Endothelial cell of umbilical vein (primary cell): ENCODE measurements at regions of chr3 and their contacts with region 1.

Region 1: GRCh38 chr3:156151824-156152428 is 31.5 kb downstream of the KCNAB1 start:
- DNase-seq: peak; percentile 75
- H3K4me3 ChIP-seq: no peak overlapping the region
- H3K27ac ChIP-seq: no peak overlapping the region
- H3K4me1 ChIP-seq: peaks cover 19% of the 10 kb centered on the region
- H3K27me3 ChIP-seq: peaks cover 0 to 1% of the 10 kb centered on the region in 2 experiments
- CTCF ChIP-seq: peak; percentile 77 to 81
- POLR2A ChIP-seq: no peak

Region 2: GRCh38 chr3:155766206-155766605 is 385.7 kb before region 1 on chr3:
- CTCF ChIA-PET with region 1: no interaction called
- POLR2A ChIA-PET with region 1: no interaction called
- dilution Hi-C with region 1: no loop called
- intact Hi-C with region 1: no loop called
- DNase-seq: no peak
- H3K4me3 ChIP-seq: no peak overlapping the region
- H3K27ac ChIP-seq: no peak overlapping the region
- H3K4me1 ChIP-seq: no peaks in the 10 kb centered on the region
- H3K27me3 ChIP-seq: no peaks in the 10 kb centered on the region
- CTCF ChIP-seq: no peak
- POLR2A ChIP-seq: no peak

Region 3: GRCh38 chr3:156382458-156383346 is 230.8 kb after region 1 on chr3:
- CTCF ChIA-PET with region 1: interaction called, 223 read pairs
- POLR2A ChIA-PET with region 1: no interaction called
- dilution Hi-C with region 1: no loop called
- intact Hi-C with region 1: loop called (anchors 1 kb)
- DNase-seq: peak; percentile 49
- H3K4me3 ChIP-seq: no peak overlapping the region
- H3K27ac ChIP-seq: no peak overlapping the region
- H3K4me1 ChIP-seq: no peaks in the 10 kb centered on the region
- H3K27me3 ChIP-seq: no peaks in the 10 kb centered on the region
- CTCF ChIP-seq: peak; percentile 76 to 84
- POLR2A ChIP-seq: no peak

Region 4: DNA sequence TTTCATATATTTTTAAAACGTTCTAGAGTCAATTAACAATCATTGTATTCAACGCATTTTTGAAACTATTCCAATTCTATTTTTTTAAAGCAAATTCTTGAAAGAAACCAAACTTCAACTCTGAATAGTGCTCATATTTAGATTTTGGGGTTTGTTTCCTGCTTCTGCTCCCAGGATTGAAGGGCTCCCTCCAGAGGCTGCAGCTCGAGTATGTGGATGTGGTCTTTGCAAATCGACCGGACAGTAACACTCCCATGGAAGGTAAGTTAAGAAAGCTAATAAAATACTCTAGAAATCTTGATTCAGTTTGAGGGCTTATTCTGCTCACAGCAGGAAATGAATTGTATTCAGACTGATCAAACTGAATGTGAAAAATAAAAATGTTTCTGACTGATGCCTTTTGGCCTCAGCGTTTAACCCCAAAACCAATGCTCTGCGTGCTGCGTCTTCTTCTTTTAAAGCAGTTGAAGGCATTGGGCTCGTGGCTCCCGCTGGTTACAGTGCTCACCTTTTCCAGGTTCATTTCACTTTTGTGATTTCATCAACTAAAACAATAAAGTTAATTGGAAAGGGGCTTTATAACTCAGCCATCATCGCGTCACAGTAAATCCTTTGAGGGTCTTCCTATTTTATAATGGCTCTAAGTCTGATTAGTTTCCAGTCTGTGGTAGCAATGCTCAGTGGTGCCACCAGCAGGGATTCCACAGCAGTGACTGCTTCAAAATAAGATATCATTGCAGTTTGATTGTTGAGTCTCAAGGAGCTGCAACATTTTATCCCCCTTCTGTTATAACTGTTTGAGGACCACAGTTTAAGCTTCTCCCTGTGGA is 322.8 kb after region 1 on chr3:
- CTCF ChIA-PET with region 1: interaction called, 8 read pairs
- POLR2A ChIA-PET with region 1: no interaction called
- dilution Hi-C with region 1: no loop called
- intact Hi-C with region 1: loop called (anchors 1 kb)
- DNase-seq: no peak
- H3K4me3 ChIP-seq: no peak overlapping the region
- H3K27ac ChIP-seq: no peak overlapping the region
- H3K4me1 ChIP-seq: no peaks in the 10 kb centered on the region
- H3K27me3 ChIP-seq: no peaks in the 10 kb centered on the region
- CTCF ChIP-seq: peak; percentile 29 to 43
- POLR2A ChIP-seq: no peak

Region 5: DNA sequence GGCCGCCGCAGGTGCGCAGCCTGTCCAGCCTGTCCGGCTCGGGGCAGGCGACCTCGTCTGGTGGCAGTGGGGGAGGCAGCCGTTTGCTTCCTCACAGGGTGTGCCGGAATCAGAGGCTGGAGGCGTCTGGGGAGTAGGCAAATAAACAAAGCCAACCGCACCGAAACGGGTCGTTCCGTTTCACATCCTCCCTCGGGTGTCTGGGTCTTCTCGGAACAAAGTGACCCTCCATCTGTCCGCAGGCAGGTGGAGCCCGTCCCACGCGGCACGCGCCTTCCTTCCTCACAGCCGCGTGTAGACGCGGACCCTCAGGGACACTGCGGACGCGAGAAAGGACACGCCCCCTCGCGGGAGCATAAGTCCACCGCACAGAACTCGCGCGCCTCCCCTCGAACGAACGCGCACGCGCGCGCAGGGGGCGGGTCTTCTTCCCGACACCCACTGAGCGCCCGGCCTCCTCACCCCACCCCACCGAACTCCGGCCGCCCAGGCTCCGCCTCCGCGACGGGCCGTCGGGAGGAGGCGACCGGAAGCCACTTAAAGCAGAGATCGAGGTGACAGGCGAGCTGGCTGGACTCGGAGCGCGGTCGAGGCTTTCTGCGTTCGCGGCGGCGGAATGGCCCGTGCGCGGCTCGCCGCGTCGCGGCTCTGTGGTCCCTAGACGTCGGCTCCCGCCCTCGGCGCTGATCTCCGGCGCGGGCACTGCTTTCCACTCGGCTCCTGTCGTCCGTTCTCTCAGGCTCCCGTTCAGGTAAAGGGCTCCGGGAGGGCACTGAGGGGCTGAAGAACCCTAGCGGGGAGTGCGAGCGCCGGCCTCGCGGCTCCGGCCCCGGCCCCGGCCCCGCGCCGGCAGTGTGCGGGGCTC is 522.4 kb after region 1 on chr3 and contains the start of gene TIPARP:
- CTCF ChIA-PET with region 1: interaction called, 23 read pairs
- POLR2A ChIA-PET with region 1: no interaction called
- dilution Hi-C with region 1: no loop called
- intact Hi-C with region 1: loop called (anchors 1 kb)
- DNase-seq: peak; percentile 99
- H3K4me3 ChIP-seq: peak within 1 kb of the TSS; percentile 79 to 96 (median 82)
- H3K27ac ChIP-seq: peak within 1 kb of the TSS; percentile 80
- H3K4me1 ChIP-seq: peaks cover 31% of the 10 kb centered on the region
- H3K27me3 ChIP-seq: no peaks in the 10 kb centered on the region
- CTCF ChIP-seq: peak; percentile 41 to 60
- POLR2A ChIP-seq: peak; percentile 98
- total RNA-seq, gene TIPARP: 20.0 and 21.2 TPM in 2 replicates

Region 6: DNA sequence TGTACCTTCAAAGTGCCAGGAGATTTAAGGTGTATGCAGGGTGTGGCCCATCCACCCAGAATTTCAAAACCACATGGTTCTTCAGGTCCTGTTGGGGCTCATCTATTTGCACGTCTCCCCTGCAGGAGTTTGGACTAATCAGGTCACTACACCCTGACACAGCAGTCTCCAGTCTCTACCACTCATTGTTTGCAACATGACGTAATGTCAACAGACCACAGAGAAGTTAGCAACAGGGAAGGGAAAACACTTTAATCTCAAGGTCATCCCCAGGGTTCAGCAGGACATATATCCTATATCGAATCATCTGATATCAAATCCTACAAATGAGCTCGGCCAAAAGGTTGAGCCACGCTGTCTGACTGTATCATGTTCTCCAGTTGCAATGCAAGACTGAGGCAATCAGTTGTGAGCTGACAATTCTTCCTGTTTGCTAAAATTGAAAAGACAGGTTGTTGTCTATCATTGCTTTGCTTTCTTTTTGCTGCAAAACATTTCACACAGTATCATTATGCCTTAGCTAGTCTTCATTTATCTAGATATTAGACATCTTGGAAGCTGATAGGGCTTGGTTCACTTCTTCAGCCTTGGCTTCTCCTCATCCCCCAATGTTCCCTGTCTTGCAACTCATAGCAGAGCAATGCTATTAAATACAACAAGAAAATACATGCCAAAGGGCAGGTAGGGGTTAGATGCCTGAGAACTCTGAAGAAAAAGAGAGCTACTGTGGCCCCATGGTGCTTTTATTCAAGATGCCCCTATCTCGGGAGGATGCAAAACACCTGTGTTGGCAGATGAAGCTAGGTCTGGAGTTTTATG is 660.8 kb after region 1 on chr3:
- CTCF ChIA-PET with region 1: no interaction called
- POLR2A ChIA-PET with region 1: no interaction called
- dilution Hi-C with region 1: no loop called
- intact Hi-C with region 1: no loop called
- DNase-seq: peak; percentile 50
- H3K4me3 ChIP-seq: no peak overlapping the region
- H3K27ac ChIP-seq: peak overlapping the region; percentile 62
- H3K4me1 ChIP-seq: peaks cover 39% of the 10 kb centered on the region
- H3K27me3 ChIP-seq: no peaks in the 10 kb centered on the region
- CTCF ChIP-seq: no peak
- POLR2A ChIP-seq: no peak

Region 7: DNA sequence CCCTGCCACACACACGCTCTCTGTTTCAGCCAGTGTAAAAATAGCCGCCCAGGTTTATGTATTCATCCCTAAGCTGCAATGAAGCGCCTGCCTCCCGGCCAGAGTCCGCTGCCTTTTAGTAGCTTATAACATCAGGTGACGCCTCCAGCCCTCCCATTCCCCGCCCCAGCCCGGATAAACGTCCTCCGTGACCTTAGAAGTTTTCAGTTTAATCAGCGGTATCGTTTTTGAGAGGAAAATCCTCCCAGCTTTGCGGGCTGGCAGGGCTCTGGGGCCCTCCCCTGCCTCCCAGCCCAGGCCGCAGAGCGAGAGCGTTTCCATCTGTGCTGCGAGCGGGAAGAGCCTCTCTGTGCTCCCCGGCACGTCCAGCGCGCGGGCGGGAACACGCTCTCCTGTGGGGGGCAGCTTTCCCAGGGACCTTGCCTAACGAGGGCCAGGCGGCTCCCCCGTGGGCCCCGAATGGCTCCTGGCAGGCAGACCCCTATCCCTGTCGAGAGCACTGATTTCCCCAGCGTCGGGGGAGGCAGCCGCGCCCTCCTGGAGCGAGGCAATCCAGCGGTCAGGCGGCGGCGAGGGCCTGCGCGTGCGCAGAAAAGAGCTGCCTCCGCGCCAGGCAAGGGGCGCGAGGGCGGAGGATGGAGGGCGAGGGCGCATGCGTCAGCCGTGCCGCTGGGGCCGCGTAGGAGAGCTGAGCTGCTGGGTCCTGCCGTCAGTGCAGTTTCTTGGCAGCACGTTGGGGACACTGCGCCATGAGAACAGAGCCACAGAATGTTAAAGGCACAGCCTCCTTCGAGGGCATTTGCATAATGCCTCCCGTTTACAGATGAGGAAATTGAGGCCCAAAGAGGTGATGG is 936.9 kb after region 1 on chr3:
- CTCF ChIA-PET with region 1: interaction called, 16 read pairs
- POLR2A ChIA-PET with region 1: no interaction called
- dilution Hi-C with region 1: no loop called
- intact Hi-C with region 1: loop called (anchors 2 kb)
- DNase-seq: peak; percentile 96
- H3K4me3 ChIP-seq: peak overlapping the region; percentile 36 to 61 (median 54)
- H3K27ac ChIP-seq: peak overlapping the region; percentile 86
- H3K4me1 ChIP-seq: peaks cover 26% of the 10 kb centered on the region
- H3K27me3 ChIP-seq: no peaks in the 10 kb centered on the region
- CTCF ChIP-seq: peak in 1 of 2 donors; percentile 9
- POLR2A ChIP-seq: peak; percentile 72